ENCODE measurements at regions of chr10 and their contacts with region 1.

Region 1: DNA sequence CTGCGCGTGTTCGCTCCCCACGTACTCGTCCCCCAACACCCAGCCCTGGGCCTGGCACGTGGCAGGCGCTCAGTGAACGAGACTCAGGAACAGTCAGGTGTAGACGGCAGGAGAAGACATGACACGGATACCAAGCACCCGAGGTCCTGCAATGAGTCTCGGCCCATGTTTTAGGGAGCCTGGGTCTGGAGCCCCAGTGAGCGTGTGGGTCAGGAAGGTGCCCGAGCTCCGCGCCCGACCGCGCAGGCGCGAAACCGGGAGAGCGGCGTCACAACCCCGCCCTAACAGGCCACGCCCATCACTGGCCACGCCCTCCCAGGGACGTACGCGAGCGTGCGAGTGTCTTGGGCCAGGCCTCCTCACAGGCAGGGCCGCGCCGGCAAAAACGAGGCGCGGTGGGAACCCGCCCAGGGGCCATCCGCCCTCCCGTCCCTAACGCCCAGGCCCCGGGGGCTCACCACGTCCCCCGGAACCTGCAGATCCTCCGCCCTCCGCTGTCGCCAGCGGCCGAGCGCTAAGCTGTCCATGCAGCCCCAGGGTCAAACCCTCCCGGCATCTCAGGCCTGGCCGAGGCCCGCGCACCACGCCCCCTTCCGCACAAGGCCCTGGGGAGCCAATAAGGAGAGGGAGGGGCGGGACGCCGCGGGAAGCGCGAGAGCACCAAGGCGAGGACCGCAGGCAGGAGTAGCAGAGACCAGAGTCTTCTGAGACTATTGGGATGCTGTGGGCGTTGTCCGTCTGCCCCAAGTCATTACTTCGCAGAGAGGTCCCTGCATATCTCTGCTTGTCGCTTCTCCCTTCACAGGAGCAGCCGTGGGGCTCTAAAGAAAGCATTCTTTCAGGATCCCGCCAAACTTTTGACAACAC is at the start of gene C10orf143:
- DNase-seq: peak; percentile 96 to 99 (median 98)

Region 2: GRCh38 chr10:129993621-129994020 is 116.9 kb before region 1 on chr10:
- intact Hi-C with region 1: no loop called
- DNase-seq: no peak

Region 3: DNA sequence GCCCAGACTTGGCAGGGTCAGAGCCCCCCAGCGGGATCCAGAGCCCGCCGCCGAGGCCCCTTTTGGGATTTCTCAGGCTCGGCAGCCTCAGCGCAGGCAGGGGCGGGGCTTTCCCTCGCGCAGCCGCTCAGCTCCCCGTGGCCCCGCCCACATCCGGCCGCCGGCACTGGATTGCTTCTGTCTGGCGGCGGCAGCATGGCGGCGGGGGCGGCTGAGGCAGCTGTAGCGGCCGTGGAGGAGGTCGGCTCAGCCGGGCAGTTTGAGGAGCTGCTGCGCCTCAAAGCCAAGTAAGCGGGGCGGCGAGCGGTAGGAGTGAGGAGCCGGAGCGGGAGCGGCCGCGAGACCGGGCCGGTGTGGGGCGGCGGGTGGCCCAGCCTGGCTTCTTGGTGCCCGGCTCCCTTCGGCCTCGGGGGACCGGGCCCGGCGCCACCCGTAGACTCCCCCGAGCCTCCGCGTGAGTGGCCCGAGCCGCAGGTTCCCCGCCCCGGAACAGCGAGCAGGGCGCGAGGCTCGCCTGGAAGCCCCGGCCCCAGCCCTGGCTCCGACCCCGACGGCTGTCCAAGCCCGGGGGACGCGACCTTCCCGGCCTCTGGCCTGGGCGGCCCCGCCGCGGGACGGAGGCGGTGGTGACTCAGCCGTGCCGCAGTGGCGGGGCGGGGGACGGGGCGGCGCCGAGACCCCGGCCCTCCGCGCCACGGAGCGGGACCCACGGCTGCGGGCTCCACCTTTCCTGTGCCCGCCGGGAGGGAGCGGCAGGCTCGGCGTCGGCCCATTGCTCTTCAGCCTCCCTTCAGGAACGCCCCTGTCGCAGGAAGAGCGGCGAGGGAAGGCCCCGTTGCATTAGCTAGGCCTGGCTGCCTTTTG is 26.0 kb after region 1 on chr10 and contains the start of gene GLRX3:
- intact Hi-C with region 1: loop called (anchors 1 kb)
- DNase-seq: peak; percentile 48 to 96 (median 91)

Measured in head of caudate nucleus (tissue), 42 donors.